ENCODE measurements at regions of chr2 and their contacts with region 1.

Region 1: GRCh38 chr2:85707304-85707703 is 13.1 kb downstream of the GNLY start:
- DNase-seq: peak; percentile 87
- H3K4me3 Mint-ChIP-seq: no peak overlapping the region
- H3K27ac Mint-ChIP-seq: peak overlapping the region; percentile 73
- H3K4me1 Mint-ChIP-seq: peaks cover 51% of the 10 kb centered on the region
- H3K27me3 Mint-ChIP-seq: peaks cover 21% of the 10 kb centered on the region

Region 2: GRCh38 chr2:85642725-85643124 is 64.6 kb before region 1 on chr2:
- CTCF ChIA-PET with region 1: interaction called, 11 read pairs
- POLR2A ChIA-PET with region 1: no interaction called
- DNase-seq: no peak
- H3K4me3 Mint-ChIP-seq: no peak overlapping the region
- H3K27ac Mint-ChIP-seq: peak overlapping the region; percentile 42
- H3K4me1 Mint-ChIP-seq: peaks cover 20% of the 10 kb centered on the region
- H3K27me3 Mint-ChIP-seq: no peaks in the 10 kb centered on the region

Region 3: DNA sequence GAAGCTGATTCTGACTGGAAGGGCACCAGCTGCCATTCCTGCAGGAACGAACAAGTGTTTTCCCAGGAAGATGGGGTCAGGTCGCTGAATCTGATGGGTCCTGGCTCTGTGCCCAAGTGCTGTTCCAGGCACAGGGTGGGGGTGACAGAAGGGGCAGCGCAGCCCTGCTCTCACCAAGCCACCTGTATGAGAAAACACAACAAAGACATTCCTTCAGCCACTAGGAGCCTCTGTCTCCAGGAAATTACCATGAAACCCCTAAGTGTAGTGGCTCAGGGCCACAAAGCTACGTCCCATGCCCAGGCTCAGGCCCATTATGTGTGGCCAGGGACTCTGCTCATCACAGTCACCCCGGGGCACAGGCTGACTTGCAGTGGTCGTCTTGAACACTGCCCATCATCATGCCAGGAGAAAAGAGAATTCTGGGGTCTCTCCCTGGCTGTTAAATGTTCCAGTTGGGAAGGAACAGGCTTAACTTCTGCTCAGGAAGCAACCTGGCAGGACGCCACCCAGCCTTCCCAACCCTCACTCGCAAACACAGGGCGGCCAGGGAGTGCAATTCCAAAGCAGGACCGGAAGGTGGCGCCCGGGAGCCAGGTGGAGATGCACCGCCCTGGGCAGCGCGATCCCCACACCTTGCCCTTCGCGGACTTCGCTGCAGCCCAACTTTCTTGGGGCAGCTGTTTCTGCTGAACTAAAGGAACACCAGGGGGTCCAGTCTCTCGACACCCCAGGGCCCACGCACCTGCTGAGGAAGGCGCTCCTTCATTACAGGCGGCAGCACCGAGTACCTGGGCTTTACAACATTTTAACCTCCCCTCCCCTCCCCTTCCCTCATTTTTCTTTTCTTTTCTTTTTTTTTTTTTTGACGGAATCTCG is 28.3 kb before region 1 on chr2:
- CTCF ChIA-PET with region 1: interaction called, 39 read pairs
- POLR2A ChIA-PET with region 1: no interaction called
- DNase-seq: peak; percentile 78
- H3K4me3 Mint-ChIP-seq: no peak overlapping the region
- H3K27ac Mint-ChIP-seq: no peak overlapping the region
- H3K4me1 Mint-ChIP-seq: peaks cover 23% of the 10 kb centered on the region
- H3K27me3 Mint-ChIP-seq: peaks cover 2% of the 10 kb centered on the region

Region 4: DNA sequence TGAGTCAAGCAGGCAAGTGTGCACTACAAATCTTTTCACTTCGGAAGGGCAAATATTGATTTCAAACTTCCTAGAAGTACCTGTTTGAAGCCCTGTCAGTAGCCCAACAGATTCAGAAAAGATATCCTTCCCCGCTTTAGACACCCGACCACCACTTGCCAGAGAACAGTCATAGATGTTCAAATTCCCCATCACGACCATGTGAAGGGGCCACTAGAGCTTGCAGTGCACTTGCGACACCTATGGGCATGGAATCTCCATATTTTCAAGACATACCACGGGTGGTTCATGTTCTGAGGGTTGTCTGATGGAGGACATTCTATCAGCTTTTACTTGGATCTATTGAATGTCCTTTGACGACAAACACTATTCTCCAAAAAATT is 10.7 kb after region 1 on chr2:
- CTCF ChIA-PET with region 1: interaction called, 16 read pairs
- POLR2A ChIA-PET with region 1: no interaction called
- DNase-seq: no peak
- H3K4me3 Mint-ChIP-seq: no peak overlapping the region
- H3K27ac Mint-ChIP-seq: no peak overlapping the region
- H3K4me1 Mint-ChIP-seq: peaks cover 26% of the 10 kb centered on the region
- H3K27me3 Mint-ChIP-seq: peaks cover 6% of the 10 kb centered on the region

Region 5: GRCh38 chr2:85723707-85724360 is 16.5 kb after region 1 on chr2:
- CTCF ChIA-PET with region 1: interaction called, 16 read pairs
- POLR2A ChIA-PET with region 1: no interaction called
- DNase-seq: no peak
- H3K4me3 Mint-ChIP-seq: no peak overlapping the region
- H3K27ac Mint-ChIP-seq: no peak overlapping the region
- H3K4me1 Mint-ChIP-seq: no peaks in the 10 kb centered on the region
- H3K27me3 Mint-ChIP-seq: peaks cover 16% of the 10 kb centered on the region

Region 6: DNA sequence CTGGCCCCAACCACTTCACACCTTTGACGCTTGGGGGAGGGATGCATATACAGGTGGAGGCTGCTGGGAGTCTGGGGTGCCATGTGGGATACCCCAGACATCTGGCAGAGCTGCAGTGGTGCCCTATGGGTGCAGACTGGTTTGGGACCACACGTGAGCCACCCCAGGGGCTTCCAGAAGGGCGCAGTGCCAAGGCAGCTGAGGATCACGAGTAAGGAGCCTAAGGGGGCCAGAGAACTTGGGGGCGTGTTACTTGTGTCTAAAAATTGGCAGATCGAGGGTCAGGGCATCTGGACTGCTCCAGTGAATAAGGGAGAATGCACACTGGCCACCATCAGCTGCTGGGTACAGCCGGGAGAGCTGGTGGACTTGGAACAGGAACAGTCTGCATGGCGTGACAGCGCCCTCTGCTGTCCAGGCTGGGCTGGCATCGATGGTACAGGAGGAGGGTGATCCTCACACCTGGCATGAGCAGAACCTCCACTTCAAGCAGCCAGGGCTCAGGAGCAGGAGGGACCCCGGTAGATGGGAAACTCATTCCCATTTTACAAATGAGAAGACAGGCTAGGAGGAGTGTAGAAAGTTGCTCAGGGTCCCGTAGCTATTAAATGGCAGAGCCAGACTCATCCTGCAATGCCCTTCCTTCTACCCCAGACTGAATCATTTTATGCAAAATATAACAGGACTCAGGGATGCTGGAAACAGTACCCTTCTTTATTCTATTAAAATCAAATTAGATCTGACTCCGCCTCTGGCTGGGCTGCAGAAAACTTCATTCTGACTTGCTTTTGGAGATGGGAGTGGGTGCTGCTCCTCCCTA is 106.9 kb after region 1 on chr2:
- CTCF ChIA-PET with region 1: no interaction called
- POLR2A ChIA-PET with region 1: no interaction called
- DNase-seq: peak; percentile 87
- H3K4me3 Mint-ChIP-seq: no peak overlapping the region
- H3K27ac Mint-ChIP-seq: no peak overlapping the region
- H3K4me1 Mint-ChIP-seq: no peaks in the 10 kb centered on the region
- H3K27me3 Mint-ChIP-seq: peaks cover 6% of the 10 kb centered on the region